Mucosa of descending colon (tissue), 3 donors: ENCODE measurements at regions of chr17 and their contacts with region 1.

Region 1: DNA sequence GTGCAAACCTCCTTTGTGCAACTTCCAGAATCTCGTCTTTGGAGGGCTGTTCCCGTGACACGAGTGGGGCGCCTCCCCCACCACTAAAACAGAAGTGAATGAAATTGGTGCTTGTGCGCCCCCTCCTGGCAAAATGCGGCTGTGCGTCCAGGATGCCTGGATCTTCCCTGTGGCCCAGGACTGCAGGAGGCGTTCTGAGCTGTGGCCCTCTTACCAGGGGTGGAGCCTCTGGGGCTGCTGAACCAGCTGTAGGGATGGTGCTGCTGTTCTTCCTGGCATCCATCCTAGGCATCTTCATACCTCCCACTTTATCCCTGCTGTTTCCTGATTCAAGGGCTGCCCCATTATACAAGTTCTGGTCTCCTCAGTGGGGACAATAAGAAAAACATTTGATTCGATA is 18.5 kb upstream of the NAGLU start:
- DNase-seq: peak; percentile 91 to 95 (median 93)
- ATAC-seq: peak; percentile 73
- H3K4me3 ChIP-seq: no peak overlapping the region
- H3K4me1 ChIP-seq: peaks cover 50% of the 10 kb centered on the region
- CTCF ChIP-seq: peak; percentile 96

Region 2: GRCh38 chr17:42294469-42295398 is 222.8 kb before region 1 on chr17:
- intact Hi-C with region 1: no loop called
- DNase-seq: no peak
- ATAC-seq: peak; percentile 19
- H3K4me3 ChIP-seq: no peak overlapping the region
- H3K4me1 ChIP-seq: no peaks in the 10 kb centered on the region
- CTCF ChIP-seq: no peak

Region 3: GRCh38 chr17:42337442-42337841 is 180.1 kb before region 1 on chr17:
- intact Hi-C with region 1: no loop called
- DNase-seq: peak in 2 of 3 donors; percentile 30
- ATAC-seq: peak; percentile 61
- H3K4me3 ChIP-seq: no peak overlapping the region
- H3K4me1 ChIP-seq: no peaks in the 10 kb centered on the region
- CTCF ChIP-seq: no peak

Region 4: DNA sequence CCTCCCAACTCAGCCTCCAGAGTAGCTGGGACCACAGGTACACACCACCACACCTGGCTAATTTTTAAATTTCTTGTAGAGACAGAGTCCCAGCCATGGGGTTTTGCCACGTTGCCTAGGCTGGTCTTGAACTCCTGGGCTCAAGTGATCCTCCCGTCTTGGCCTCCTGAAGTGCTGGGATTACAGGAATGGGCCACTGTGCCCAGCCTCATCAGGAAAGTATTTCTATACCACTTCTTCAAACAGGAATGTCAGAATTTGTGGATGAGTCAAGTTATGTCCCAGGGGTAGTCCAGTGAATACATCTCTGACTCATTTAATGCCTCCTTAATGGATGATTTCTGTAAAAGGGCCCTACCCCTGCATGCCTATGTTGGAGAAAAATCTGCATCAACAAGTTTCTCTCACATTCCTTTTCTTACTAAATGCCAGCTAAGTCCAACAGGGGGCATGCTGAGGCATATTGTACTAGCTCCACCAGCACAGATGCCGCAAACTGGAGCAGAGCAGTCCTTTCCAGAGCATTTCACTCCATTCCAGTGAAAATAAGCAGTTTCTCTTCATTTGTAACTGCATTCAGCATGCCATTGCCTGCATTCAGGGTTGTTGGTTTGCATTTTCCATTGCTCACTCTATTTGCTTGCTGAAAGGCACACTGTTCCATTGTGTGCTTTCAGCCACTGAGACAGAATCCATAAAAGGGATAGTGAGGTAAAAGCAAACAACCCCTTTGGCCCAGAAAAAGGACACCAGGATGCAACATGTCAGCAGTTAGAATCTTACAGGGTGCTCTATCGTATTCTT is 89.2 kb before region 1 on chr17:
- intact Hi-C with region 1: loop called in 1 of 2 experiments (anchors 10 kb)
- DNase-seq: peak in 2 of 3 donors; percentile 14 to 85
- ATAC-seq: peak; percentile 86
- H3K4me3 ChIP-seq: no peak overlapping the region
- H3K4me1 ChIP-seq: peaks cover 5% of the 10 kb centered on the region
- CTCF ChIP-seq: peak; percentile 43

Region 5: DNA sequence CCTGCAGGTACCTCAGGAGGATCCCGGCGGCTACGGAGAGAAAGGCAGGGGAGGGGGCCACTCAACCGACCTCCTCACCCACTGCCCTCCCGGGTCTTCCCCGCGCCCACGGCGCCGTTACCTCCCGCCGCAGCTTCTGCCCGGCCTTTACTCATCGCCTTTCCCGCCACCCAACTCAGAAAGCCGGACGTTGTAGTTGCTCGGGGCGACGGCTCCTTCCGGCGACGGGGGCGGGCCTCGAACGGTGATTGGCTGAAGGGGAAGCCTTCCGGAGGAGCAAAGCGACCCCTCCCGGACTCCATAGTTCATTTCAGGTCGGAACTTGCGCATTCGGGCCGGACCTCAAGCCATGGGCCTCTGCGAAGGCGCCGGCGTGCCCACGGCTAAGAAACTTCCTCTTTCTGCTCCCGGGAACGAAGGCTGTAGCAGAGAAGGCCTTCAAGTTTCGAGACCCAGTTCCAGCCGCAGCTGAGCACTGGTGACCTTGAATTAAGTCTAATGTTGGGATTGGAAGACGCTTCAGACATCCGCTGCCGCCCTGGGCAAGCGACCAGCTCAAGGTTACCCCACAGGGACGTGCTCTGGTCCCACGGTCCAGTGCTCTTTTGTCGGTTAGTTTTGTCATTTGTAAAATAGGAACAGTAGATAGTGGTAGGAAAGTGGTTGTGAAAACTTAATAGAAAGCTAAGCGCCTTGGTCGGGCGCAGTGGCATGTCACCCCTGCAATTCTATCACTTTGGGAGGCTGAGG is 60.2 kb after region 1 on chr17 and contains the start of gene PSMC3IP:
- intact Hi-C with region 1: no loop called
- DNase-seq: peak; percentile 96 to 97 (median 97)
- ATAC-seq: peak; percentile 96
- H3K4me3 ChIP-seq: peak within 1 kb of the TSS; percentile 53
- H3K4me1 ChIP-seq: peaks cover 17% of the 10 kb centered on the region
- CTCF ChIP-seq: peak; percentile 41
- total RNA-seq, gene PSMC3IP: 1.9 to 6.4 (median 3.1) TPM